CD8-positive, alpha-beta T cell (primary cell): ENCODE measurements at regions of chr6 and their contacts with region 1.

Region 1: DNA sequence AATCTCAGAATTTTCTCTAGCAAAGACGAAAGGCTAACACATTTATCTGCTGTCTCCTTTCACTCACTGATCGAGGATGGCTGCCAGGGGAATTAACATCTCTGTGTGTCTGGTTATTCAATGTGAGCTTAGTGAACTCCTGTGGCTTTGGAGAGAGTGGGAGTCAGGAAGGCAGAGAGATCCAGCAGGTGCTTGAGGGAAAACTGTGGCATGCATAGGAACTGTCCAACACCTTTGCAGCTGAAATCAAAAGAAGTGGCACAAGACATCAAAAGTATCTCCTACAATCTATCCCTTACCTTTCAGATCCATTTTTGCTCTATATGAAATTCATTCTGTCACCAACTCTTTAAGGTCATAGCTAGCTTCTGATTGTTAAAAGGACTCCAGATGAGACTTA is 11.8 kb upstream of the FAM184A start:
- DNase-seq: no peak
- ATAC-seq: no peak
- H3K4me3 ChIP-seq: no peak overlapping the region
- H3K4me3 Mint-ChIP-seq: no peak overlapping the region
- H3K27ac ChIP-seq: no peak overlapping the region
- H3K27ac Mint-ChIP-seq: no peak overlapping the region
- H3K4me1 ChIP-seq: no peaks in the 10 kb centered on the region
- H3K4me1 Mint-ChIP-seq: no peaks in the 10 kb centered on the region
- H3K27me3 ChIP-seq: no peaks in the 10 kb centered on the region
- H3K27me3 Mint-ChIP-seq: peaks cover 8% of the 10 kb centered on the region
- CTCF ChIP-seq: no peak

Region 2: GRCh38 chr6:119105282-119105681 is 15.0 kb after region 1 on chr6:
- CTCF ChIA-PET with region 1: interaction called, 12 read pairs
- POLR2A ChIA-PET with region 1: no interaction called
- intact Hi-C with region 1: loop called in 1 of 2 experiments (anchors 2 kb)
- DNase-seq: no peak
- ATAC-seq: no peak
- H3K4me3 ChIP-seq: no peak overlapping the region
- H3K4me3 Mint-ChIP-seq: no peak overlapping the region
- H3K27ac ChIP-seq: no peak overlapping the region
- H3K27ac Mint-ChIP-seq: no peak overlapping the region
- H3K4me1 ChIP-seq: no peaks in the 10 kb centered on the region
- H3K4me1 Mint-ChIP-seq: peaks cover 5% of the 10 kb centered on the region
- H3K27me3 ChIP-seq: no peaks in the 10 kb centered on the region
- H3K27me3 Mint-ChIP-seq: no peaks in the 10 kb centered on the region
- CTCF ChIP-seq: no peak

Region 3: DNA sequence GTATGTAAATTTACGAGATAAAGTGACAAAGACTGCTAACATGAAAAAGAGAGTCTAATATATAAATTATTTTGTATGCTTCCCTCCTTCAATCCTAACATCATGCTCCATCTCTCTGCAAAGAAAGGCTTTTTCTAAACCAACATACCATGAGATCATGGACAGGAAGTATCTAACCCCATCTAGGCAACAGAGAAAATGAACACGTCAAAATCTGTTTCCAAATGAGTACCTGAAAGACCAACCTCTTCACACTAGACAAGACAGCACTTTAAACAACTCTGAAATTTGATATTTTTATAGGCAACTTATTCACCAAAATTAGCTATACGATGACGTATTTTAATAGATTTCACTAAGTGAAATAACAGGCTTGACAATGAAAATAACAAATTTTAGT is 204.7 kb after region 1 on chr6:
- CTCF ChIA-PET with region 1: no interaction called
- POLR2A ChIA-PET with region 1: no interaction called
- intact Hi-C with region 1: no loop called
- DNase-seq: no peak
- ATAC-seq: no peak
- H3K4me3 ChIP-seq: no peak overlapping the region
- H3K4me3 Mint-ChIP-seq: no peak overlapping the region
- H3K27ac ChIP-seq: no peak overlapping the region
- H3K27ac Mint-ChIP-seq: no peak overlapping the region
- H3K4me1 ChIP-seq: no peaks in the 10 kb centered on the region
- H3K4me1 Mint-ChIP-seq: peaks cover 17% of the 10 kb centered on the region
- H3K27me3 ChIP-seq: no peaks in the 10 kb centered on the region
- H3K27me3 Mint-ChIP-seq: no peaks in the 10 kb centered on the region
- CTCF ChIP-seq: no peak

Region 4: GRCh38 chr6:119349323-119350042 is 259.2 kb after region 1 on chr6 and contains the start of gene MAN1A1:
- CTCF ChIA-PET with region 1: no interaction called
- POLR2A ChIA-PET with region 1: no interaction called
- intact Hi-C with region 1: no loop called
- DNase-seq: peak; percentile 79 to 94 (median 88)
- ATAC-seq: peak; percentile 86
- H3K4me3 ChIP-seq: peak within 1 kb of the TSS; percentile 91 to 92
- H3K4me3 Mint-ChIP-seq: peak within 1 kb of the TSS; percentile 90
- H3K27ac ChIP-seq: peak within 1 kb of the TSS; percentile 65 to 67
- H3K27ac Mint-ChIP-seq: peak within 1 kb of the TSS; percentile 88
- H3K4me1 ChIP-seq: peaks cover 30% of the 10 kb centered on the region
- H3K4me1 Mint-ChIP-seq: peaks cover 45% of the 10 kb centered on the region
- H3K27me3 ChIP-seq: no peaks in the 10 kb centered on the region
- H3K27me3 Mint-ChIP-seq: no peaks in the 10 kb centered on the region
- CTCF ChIP-seq: no peak
- total RNA-seq, gene MAN1A1: 8.4 to 8.5 TPM